Panc1 (cell line): ENCODE measurements at regions of chr15 and their contacts with region 1.

Region 1: DNA sequence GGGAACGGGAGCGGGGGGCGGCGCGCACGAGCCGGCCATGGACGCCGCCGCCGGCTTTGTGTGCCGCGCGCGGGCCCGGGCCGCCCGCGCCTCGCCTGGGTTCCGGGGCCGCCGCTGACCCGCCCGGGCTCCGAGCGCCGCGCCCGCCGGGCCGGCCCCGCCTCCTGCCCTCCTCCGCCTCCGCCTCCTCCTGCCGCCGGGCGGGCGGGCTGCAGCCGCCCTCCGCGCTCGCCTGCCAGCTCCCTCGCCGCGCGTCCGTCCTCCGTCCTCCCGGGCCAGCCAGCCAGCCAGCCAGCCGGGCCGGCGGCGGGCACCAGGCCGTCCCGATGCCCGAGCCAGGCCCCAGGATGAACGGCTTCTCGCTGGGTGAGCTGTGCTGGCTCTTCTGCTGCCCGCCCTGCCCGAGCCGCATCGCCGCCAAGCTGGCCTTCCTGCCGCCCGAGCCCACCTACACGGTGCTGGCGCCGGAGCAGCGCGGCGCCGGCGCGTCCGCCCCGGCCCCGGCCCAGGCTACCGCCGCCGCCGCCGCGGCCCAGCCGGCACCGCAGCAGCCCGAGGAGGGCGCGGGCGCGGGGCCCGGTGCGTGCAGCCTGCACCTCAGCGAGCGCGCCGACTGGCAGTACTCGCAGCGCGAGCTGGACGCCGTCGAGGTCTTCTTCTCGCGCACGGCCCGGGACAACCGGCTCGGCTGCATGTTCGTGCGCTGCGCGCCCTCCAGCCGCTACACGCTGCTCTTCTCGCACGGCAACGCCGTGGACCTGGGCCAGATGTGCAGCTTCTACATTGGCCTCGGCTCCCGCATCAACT is at the start of gene ABHD17C:
- DNase-seq: no peak
- ATAC-seq: peak; percentile 92
- H3K4me3 ChIP-seq: peak within 1 kb of the TSS; percentile 69 to 84
- H3K27ac ChIP-seq: peak within 1 kb of the TSS; percentile 88
- H3K4me1 ChIP-seq: peaks cover 16% of the 10 kb centered on the region
- H3K27me3 ChIP-seq: no peaks in the 10 kb centered on the region
- CTCF ChIP-seq: no peak
- total RNA-seq, gene ABHD17C: 16.3 TPM

Region 2: DNA sequence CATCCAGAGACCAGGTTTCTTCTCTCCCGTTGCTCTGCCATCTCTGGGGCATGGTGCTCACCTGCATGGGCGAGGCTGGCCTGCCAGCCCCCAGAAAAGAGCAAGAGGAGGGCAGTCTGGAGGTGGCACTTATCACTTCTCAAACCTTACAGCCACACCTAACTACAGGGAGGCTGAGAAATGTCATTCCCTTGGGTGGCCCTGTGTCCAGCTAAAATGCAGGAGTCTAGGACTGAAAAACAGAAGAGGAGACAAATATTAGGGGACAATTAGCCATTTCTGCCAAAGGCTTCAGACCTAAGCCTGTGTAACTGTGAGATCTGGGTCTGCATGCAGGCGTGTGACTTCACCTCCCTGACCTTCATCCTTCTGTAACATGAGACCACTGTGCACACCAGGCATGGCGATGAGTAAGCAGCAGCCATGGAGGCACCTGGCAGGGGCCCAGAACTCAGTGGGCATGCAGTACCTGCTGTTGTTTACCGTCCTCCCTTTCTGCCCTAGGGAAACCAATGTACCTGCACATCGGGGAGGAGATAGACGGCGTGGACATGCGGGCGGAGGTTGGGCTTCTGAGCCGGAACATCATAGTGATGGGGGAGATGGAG is 211.0 kb after region 1 on chr15:
- CTCF ChIA-PET with region 1: no interaction called
- POLR2A ChIA-PET with region 1: interaction called, 10 read pairs
- in situ Hi-C with region 1: no loop called
- intact Hi-C with region 1: no loop called
- DNase-seq: no peak
- ATAC-seq: no peak
- H3K4me3 ChIP-seq: no peak overlapping the region
- H3K27ac ChIP-seq: no peak overlapping the region
- H3K4me1 ChIP-seq: no peaks in the 10 kb centered on the region
- H3K27me3 ChIP-seq: 0 out of 2 replicates have a peak, but pooled peaks cover 2% of the 10 kb centered on the region
- CTCF ChIP-seq: no peak